Mammary epithelial cell (primary cell): ENCODE measurements at regions of chr19 and their contacts with region 1.

Region 1: GRCh38 chr19:18771328-18772242 is 19.5 kb downstream of the COMP start:
- DNase-seq: no peak
- H3K4me3 ChIP-seq: no peak overlapping the region
- H3K27ac ChIP-seq: no peak overlapping the region
- H3K4me1 ChIP-seq: peaks cover 29% of the 10 kb centered on the region
- H3K27me3 ChIP-seq: no peaks in the 10 kb centered on the region
- CTCF ChIP-seq: peak in 1 of 2 donors; percentile 19

Region 2: DNA sequence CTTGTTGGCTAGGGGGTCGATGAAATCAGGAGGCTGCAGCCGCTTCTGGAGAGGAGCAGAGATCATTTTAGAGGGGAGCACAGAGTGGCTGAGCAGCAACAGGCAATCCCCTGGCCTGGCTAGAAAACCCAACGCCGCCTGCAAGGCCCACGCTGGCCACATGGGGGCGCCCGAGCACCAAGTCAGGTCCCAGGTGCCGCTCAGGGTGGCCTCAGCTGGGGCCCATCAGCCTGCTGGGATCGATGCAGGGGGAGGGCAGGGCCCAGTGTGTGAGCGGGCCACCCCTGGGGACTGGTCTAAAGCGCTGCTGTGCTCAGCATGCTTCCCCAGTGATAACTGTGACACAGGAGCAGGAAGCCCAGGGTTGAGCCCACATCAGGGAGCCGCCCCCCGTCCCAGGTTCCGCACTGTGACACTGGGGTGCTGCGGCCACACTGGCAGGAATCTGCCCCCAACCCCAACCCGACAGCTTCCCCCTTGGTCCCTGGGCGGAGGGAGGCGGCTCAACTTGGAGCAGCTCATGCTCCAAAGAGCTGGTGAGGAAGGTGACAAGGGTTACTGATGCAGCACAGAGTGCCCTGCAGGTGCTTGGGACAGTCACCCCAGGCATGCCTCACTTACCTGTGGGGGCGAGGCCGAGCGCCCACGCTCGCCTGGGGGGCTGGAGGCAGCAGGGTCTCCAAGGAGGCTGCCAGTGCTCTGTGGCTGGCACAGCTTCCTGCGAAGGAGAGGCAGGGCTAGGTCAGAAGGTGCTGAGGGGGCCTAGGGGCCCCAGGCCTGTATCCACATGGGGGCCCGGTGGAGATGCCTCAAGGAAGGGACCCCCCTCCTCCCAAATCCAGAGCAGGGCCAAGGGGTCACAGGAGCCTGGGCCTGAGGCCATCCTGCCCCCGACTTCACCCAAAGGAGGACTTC is 320.4 kb before region 1 on chr19:
- CTCF ChIA-PET with region 1: no interaction called
- dilution Hi-C with region 1: no loop called
- in situ Hi-C with region 1: no loop called
- intact Hi-C with region 1: loop called (anchors 5 kb)
- DNase-seq: no peak
- H3K4me3 ChIP-seq: no peak overlapping the region
- H3K27ac ChIP-seq: no peak overlapping the region
- H3K4me1 ChIP-seq: peaks cover 9% of the 10 kb centered on the region
- H3K27me3 ChIP-seq: no peaks in the 10 kb centered on the region
- CTCF ChIP-seq: peak; percentile 92 to 98

Region 3: GRCh38 chr19:18831524-18832305 is 60.1 kb after region 1 on chr19 and contains the start of gene UPF1:
- CTCF ChIA-PET with region 1: no interaction called
- dilution Hi-C with region 1: no loop called
- in situ Hi-C with region 1: no loop called
- intact Hi-C with region 1: loop called (anchors 5 kb)
- DNase-seq: peak; percentile 86
- H3K4me3 ChIP-seq: peak within 1 kb of the TSS; percentile 87 to 90 (median 88)
- H3K27ac ChIP-seq: peak within 1 kb of the TSS; percentile 54
- H3K4me1 ChIP-seq: peaks cover 9% of the 10 kb centered on the region
- H3K27me3 ChIP-seq: no peaks in the 10 kb centered on the region
- CTCF ChIP-seq: no peak
- total RNA-seq, gene UPF1: 74.5 to 82.0 TPM

Region 4: DNA sequence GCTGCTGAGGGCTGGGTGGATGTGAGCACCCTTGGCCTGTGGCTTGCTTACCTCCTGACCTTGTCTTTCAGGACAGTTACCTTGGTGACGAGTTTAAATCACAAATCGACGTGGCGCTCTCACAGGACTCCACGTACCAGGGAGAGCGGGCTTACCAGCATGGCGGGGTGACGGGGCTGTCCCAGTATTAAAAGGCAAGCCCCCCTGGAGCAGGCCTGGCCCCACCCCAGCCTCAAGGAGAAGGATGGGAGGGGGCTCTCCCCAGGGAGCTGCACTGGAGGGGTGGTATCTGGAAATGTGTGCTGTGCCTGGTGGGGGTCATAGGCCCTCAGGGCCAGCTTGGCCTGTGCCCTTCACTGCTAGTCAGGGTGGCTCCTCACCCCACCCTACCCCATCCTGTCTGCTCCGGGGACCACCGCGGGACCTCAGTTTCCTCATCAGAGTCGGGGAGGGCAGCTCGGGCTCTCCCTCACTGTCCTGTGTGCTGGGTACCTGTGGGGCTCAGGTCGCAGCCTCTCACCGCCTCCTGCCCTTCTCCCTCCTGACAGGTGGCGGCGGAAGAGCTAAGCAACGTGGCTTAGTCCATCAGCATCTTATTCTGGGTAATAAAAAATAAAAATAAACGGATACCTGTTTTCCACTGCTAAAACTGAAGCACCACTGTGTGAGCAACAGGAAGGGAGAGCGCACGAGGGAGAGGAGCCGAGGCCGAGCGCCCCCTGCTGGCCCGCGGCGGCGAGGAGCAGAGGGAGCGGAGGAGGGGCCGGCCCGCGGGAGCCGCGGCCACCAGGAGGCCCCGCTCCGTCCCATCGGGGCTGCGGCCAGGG is 94.6 kb after region 1 on chr19:
- CTCF ChIA-PET with region 1: no interaction called
- dilution Hi-C with region 1: no loop called
- in situ Hi-C with region 1: no loop called
- intact Hi-C with region 1: loop called (anchors 2 kb)
- DNase-seq: peak; percentile 39
- H3K4me3 ChIP-seq: no peak overlapping the region
- H3K27ac ChIP-seq: no peak overlapping the region
- H3K4me1 ChIP-seq: peaks cover 14% of the 10 kb centered on the region
- H3K27me3 ChIP-seq: no peaks in the 10 kb centered on the region
- CTCF ChIP-seq: peak; percentile 81 to 88

Region 5: DNA sequence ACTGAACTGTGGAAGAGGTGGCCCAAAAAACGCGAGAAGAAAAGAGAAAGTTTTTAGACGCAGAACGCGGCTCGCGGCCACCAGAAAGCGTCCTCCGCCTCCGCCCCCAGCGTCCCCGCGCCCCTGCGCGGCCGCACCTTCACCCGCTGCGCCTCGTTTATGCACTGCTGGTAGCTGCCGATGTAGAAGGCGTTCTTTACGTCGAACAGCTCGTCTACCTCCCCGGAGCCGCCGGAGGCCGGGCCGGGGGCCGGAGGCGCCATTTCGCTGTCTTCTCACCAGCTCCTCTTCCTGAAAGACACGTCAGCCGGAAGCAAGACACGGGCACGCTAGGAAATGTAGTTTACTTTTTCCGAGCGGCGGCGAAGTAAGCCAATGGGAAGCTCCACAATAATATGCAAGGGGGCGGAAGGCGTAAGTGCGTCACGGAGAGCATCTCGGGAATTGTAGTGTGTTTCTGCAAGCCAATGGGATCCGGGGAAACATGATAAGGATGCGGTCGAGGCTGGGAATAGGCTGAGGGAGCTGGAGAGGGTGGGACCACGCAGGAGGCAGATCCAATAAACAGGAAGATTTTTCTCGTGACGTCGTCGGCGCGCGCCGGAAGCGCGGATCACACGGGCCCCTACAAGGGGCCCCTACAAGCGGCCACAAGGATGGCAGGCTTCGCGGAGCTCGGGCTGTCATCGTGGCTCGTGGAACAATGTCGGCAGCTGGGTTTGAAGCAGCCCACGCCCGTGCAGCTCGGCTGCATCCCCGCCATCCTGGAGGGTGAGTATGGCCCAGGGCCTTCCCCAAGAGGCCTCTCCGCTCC is 147.7 kb after region 1 on chr19 and contains the starts of genes COPE and DDX49:
- CTCF ChIA-PET with region 1: no interaction called
- dilution Hi-C with region 1: no loop called
- in situ Hi-C with region 1: no loop called
- intact Hi-C with region 1: loop called (anchors 2 kb)
- DNase-seq: peak; percentile 100
- H3K4me3 ChIP-seq: peak within 1 kb of the TSS; percentile 77 to 96 (median 85)
- H3K27ac ChIP-seq: peak within 1 kb of the TSS; percentile 90
- H3K4me1 ChIP-seq: peaks cover 15% of the 10 kb centered on the region
- H3K27me3 ChIP-seq: no peaks in the 10 kb centered on the region
- CTCF ChIP-seq: peak in 1 of 2 donors; percentile 10
- total RNA-seq, gene COPE: 180 to 226 TPM
- total RNA-seq, gene DDX49: 44.2 to 47.7 TPM

Region 6: GRCh38 chr19:18951665-18952281 is 180.2 kb after region 1 on chr19:
- CTCF ChIA-PET with region 1: no interaction called
- dilution Hi-C with region 1: loop called (anchors 5 kb)
- in situ Hi-C with region 1: no loop called
- intact Hi-C with region 1: no loop called
- DNase-seq: peak; percentile 96
- H3K4me3 ChIP-seq: no peak overlapping the region
- H3K27ac ChIP-seq: no peak overlapping the region
- H3K4me1 ChIP-seq: peaks cover 24% of the 10 kb centered on the region
- H3K27me3 ChIP-seq: no peaks in the 10 kb centered on the region
- CTCF ChIP-seq: no peak